ENCODE measurements at regions of chr6 and their contacts with region 1.

Region 1: GRCh38 chr6:53651764-53652401 is 13.7 kb downstream of the KLHL31 start:
- DNase-seq: no peak
- H3K4me3 ChIP-seq: peak overlapping the region; percentile 50
- H3K27ac ChIP-seq: no peak overlapping the region
- H3K4me1 ChIP-seq: peaks cover 13% of the 10 kb centered on the region
- CTCF ChIP-seq: no peak

Region 2: DNA sequence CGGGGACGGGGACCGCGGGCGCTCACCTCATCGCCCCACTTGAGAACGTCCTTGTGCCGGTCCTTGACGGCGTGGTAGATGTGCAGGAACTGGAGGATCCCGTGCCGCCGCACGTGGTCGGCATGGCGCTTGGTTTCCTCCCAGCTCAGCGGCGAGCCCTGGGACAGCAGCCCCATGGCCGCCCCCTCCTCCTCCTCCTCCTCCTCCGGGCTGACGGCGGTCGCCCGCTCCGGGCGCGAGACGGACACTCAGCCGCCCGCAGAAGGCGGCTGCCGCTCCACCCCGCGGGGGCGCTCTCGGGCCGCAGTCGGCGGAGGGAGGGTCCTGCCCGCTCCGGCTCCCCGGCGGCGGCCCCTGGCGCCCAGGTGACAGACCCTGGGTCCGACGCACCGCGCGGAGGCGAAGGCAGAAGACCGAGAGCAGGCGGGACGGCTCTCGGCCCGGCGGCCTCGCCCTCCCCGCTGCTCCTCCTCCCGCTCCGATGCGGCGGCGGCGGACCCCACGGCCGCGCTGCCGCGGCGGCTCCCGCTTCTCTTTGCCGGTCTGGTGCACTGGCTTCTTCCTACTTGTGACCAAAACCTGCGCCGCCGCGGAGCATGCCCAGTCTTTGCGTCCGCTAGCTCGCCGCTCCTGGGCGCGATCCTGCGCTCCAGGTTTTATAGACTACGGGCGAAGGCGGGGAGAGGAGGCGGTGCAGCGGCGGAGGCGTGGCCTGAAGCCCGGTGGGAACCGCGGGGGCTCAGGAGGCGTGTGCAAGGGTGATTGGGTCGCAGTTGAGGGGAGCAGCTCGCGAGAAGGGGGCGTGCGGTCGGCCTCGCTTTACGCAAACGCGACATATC is 107.2 kb before region 1 on chr6 and contains the start of gene GCLC:
- CTCF ChIA-PET with region 1: no interaction called
- POLR2A ChIA-PET with region 1: no interaction called
- intact Hi-C with region 1: loop called (anchors 1 kb)
- DNase-seq: peak; percentile 97
- H3K4me3 ChIP-seq: peak within 1 kb of the TSS; percentile 96
- H3K27ac ChIP-seq: peak within 1 kb of the TSS; percentile 66
- H3K4me1 ChIP-seq: peaks cover 34% of the 10 kb centered on the region
- CTCF ChIP-seq: peak; percentile 75
- total RNA-seq, gene GCLC: 14.3 and 16.7 TPM in 2 replicates